Endothelial cell of umbilical vein (primary cell): ENCODE measurements at regions of chr5 and their contacts with region 1.

Region 1: DNA sequence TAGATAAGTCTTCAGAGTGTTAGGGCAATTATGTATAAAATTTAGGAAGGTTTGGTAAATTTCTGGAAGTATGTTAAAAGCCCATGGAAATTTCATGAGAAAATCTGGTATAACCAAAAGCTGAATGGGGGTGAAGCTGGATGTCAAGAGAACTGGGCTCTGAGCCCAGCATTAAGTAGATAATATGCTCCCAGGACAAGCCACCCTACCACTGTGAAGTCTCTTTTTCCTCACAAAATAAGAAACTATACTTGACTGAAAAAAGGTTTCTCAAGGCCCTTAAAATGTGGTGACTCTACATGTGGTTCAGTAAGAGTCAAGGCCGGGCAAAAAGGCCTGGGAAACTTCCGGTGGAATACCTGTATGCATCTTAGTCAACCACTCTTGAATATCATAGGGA is 310.3 kb downstream of the EBF1 start:
- DNase-seq: no peak
- H3K4me3 ChIP-seq: no peak overlapping the region
- H3K27ac ChIP-seq: no peak overlapping the region
- H3K4me1 ChIP-seq: no peaks in the 10 kb centered on the region
- H3K27me3 ChIP-seq: no peaks in the 10 kb centered on the region
- CTCF ChIP-seq: no peak
- POLR2A ChIP-seq: no peak

Region 2: DNA sequence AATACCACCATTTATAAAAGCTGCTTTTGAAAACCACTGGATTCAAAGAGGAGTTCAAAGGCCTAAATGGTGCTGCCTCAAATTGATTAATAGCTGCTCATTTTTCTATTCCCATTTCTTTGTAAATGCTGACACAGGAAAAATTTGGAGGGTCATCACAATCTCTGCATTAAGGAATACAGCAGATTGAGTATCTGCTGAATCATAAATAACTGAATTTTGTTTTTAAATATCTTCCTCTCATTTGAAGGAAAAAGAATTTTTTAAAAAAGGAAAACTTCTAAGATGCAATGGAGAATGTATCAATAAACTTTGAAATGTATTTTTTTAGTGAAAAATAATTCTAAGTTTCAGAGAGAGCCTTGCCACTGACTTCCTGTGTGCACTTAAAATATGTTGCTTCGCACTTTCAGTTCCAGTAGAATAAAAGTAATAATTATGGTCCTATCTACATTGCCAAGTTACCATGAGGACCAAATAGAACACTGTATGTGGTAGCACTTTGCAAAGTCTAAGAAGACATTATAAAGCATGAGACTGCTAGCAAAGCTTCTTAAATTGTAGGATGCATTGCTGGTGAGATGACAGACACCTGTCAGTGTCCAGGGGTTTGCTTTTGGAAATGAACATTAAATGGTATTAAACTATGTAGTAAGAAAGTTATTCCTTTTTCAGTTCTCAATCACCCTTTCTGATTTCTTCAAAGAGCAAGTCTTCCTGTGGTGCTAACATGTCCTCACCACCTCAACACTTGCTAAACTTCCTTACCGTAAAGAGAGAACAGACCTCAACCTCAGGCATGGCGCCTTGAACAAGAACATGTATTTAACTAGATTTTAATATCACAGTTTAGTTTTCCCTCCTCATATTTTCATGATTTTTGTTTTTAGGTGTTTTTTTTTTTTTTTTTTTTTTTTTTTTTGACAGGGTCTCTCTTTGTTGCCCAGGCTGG is 244.8 kb before region 1 on chr5:
- CTCF ChIA-PET with region 1: no interaction called
- POLR2A ChIA-PET with region 1: interaction called, 12 read pairs
- dilution Hi-C with region 1: no loop called
- intact Hi-C with region 1: no loop called
- DNase-seq: no peak
- H3K4me3 ChIP-seq: no peak overlapping the region
- H3K27ac ChIP-seq: no peak overlapping the region
- H3K4me1 ChIP-seq: no peaks in the 10 kb centered on the region
- H3K27me3 ChIP-seq: no peaks in the 10 kb centered on the region
- CTCF ChIP-seq: no peak
- POLR2A ChIP-seq: no peak